ENCODE measurements at regions of chr12 and their contacts with region 1.

Region 1: DNA sequence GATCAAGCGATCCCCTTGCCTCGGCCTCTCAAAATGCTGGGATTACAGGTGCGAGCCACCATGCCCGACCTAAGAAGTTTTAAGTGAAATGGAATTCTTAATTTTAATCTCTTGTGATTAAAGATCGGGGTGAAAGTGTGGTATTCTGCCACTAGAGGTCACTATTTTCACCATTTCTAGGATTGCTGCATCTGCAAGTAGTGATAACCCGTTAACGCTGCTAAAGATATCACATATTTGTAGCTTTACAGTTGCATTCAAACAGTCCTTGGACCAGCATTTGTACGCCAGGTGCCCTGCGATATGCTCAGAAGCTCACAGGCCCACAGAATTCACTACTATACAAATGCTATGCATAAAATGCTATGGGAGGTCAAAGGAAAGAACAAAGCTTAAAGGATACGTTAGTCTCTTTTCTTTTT is 19.3 kb downstream of the CCDC62 start:
- DNase-seq: peak; percentile 66
- CTCF ChIP-seq: peak; percentile 51

Region 2: DNA sequence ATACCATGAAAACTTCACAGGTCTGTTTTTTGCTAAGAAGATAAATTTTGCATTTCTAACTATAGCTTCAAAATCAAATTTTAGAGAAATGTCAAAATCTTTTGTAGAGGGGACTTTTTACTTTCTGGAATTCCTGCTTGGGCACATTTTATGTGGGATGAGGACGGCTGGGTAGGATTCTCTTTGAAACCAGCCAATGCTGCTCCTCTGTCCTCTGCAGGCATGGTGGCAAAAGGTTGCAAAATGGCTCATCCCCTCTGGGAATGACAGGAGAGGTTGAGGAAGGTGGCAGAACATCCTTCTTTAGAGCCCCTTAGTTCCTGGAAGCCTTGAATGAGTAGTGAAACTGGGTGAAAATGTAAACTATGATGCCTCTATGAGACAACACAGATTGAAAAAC is 26.0 kb before region 1 on chr12:
- CTCF ChIA-PET with region 1: interaction called, 36 read pairs
- POLR2A ChIA-PET with region 1: no interaction called
- DNase-seq: no peak
- CTCF ChIP-seq: no peak

Region 3: GRCh38 chr12:122813310-122813713 is 19.6 kb after region 1 on chr12:
- CTCF ChIA-PET with region 1: interaction called, 19 read pairs
- POLR2A ChIA-PET with region 1: interaction called, 3 read pairs
- DNase-seq: peak; percentile 60
- CTCF ChIP-seq: no peak

Region 4: DNA sequence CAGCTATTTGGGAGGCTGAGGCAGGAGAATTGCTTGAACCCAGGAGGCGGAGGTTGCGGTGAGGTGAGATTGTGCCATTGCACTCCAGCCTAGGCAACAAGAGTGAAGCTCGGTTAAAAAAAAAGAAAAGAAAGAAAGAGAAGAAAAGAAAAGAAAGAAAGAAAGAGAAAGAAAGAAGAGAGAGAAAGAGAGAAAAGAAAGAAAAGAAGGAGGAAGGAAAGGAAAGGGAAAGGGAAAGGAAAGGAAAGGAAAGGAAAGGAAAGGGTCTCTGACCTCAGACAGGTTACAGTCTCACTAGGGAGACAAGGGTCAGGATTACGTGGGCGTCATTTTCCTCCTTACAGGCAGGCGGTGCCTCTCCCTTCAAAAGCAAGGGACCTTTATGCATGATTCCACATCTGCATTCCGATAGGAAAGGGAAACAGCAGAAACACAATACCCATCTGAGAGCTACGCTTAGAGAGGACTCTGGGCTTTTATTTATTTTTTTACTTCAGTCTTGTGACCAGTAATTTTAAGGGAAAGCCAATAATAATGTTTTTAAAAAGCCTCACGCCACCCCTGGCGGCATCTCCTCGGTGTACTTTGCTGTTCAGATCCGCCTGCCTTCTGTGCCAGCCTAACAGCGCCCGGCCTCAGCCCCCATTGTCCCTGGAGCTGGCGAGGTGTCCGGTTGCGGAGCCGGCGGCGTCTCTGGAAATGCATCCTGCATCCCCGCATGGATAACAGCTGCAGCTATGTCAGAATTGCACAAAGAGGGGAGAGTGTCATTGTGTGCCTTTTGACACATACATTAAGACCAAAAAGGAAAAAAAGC is 40.6 kb after region 1 on chr12:
- CTCF ChIA-PET with region 1: interaction called, 17 read pairs
- POLR2A ChIA-PET with region 1: no interaction called
- DNase-seq: no peak
- CTCF ChIP-seq: no peak

Region 5: GRCh38 chr12:122951979-122952892 is 158.5 kb after region 1 on chr12:
- CTCF ChIA-PET with region 1: interaction called, 12 read pairs
- POLR2A ChIA-PET with region 1: no interaction called
- DNase-seq: peak; percentile 87
- CTCF ChIP-seq: peak; percentile 93

Region 6: GRCh38 chr12:123043536-123044001 is 249.9 kb after region 1 on chr12:
- CTCF ChIA-PET with region 1: no interaction called
- POLR2A ChIA-PET with region 1: no interaction called
- DNase-seq: peak; percentile 73
- CTCF ChIP-seq: peak; percentile 74